GM12878 (cell line): ENCODE measurements at regions of chr3 and their contacts with region 1.

Region 1: GRCh38 chr3:39346785-39347585 is 17.5 kb downstream of the CCR8 start:
- DNase-seq: no peak
- ATAC-seq: peak; percentile 91
- H3K4me3 ChIP-seq: peak overlapping the region; percentile 0; the same call in 1 of the 2 replicates
- H3K27ac ChIP-seq: peak overlapping the region; percentile 61
- H3K4me1 ChIP-seq: peaks cover 17% of the 10 kb centered on the region
- H3K27me3 ChIP-seq: no peaks in the 10 kb centered on the region
- CTCF ChIP-seq: no peak
- EP300 ChIP-seq: no peak
- POLR2A ChIP-seq: no peak
- RAD21 ChIP-seq: no peak

Region 2: GRCh38 chr3:39327746-39328349 is 19.1 kb before region 1 on chr3:
- CTCF ChIA-PET with region 1: interaction called, 7 read pairs
- POLR2A ChIA-PET with region 1: interaction called, 11 read pairs
- RAD21 ChIA-PET with region 1: interaction called, 13 read pairs
- SMC1A ChIA-PET with region 1: interaction called, 34 read pairs
- in situ Hi-C with region 1: no loop called
- intact Hi-C with region 1: no loop called
- DNase-seq: peak; percentile 67
- ATAC-seq: peak; percentile 87
- H3K4me3 ChIP-seq: no peak overlapping the region
- H3K27ac ChIP-seq: peak overlapping the region; percentile 84
- H3K4me1 ChIP-seq: peaks cover 23% of the 10 kb centered on the region
- H3K27me3 ChIP-seq: no peaks in the 10 kb centered on the region
- CTCF ChIP-seq: no peak
- EP300 ChIP-seq: peak in 1 of 2 experiments; percentile 63; a peak in 2 of 4 replicates
- POLR2A ChIP-seq: no peak
- RAD21 ChIP-seq: no peak

Region 3: DNA sequence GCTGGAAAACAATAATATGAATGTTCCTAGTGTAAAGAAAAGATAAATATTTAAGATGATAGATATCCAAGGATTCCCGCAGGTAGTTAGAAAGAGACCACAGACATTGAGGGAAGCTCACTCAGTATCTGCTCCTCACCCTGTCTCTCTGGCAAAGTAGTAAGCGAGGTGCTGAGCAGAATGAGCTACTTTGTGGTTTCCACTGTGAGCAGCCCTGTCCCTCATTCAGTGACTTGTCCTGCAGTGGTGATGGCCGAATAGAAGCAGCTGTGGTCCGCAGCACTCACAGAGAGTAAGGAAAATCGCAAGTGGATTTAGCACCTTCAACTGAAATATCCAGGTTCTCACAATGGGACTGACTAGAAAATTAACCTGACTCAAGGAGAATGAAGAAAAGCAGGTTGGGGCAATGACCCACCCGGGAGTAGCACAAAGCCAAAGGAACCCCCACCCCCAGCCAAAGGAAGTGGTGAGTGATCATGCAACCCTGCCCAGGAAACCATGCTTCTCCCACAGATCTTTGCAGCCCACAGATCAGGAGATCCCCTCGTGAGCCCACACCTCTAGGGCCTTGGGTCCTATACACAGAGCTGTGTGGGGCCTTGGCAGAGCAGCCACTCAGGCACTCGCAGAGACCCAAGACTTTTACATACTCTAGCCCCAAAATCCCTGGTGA is 14.4 kb after region 1 on chr3:
- CTCF ChIA-PET with region 1: interaction called, 7 read pairs
- POLR2A ChIA-PET with region 1: interaction called, 6 read pairs
- RAD21 ChIA-PET with region 1: interaction called, 6 read pairs
- SMC1A ChIA-PET with region 1: interaction called, 39 read pairs
- in situ Hi-C with region 1: no loop called
- intact Hi-C with region 1: no loop called
- DNase-seq: no peak
- ATAC-seq: peak; percentile 94
- H3K4me3 ChIP-seq: no peak overlapping the region
- H3K27ac ChIP-seq: peak overlapping the region; percentile 20; the same call in 1 of the 2 replicates
- H3K4me1 ChIP-seq: peaks cover 11% of the 10 kb centered on the region
- H3K27me3 ChIP-seq: no peaks in the 10 kb centered on the region
- CTCF ChIP-seq: no peak
- EP300 ChIP-seq: no peak
- POLR2A ChIP-seq: no peak
- RAD21 ChIP-seq: no peak